HEK293T (cell line): ENCODE measurements at regions of chr2 and their contacts with region 1.

Region 1: DNA sequence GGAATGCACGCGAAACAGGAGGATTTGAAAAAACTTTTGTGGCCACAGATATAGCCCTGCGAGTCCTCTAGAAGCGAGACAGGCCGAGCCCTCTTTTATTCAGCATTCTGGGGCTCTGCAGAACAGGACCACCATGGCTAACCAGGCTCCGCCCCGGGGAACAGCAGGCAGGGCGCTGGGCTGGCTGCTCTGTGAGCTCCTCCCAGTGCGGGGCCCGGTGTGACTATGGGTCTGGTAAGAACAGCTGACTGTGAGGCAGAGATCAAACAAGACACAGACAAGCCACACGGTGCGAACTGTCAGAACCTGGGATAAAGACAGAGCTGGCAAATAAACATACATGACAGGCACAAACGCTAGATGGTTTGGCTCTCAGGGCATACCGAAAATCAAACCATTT is 15.5 kb downstream of the PXDN start:
- DNase-seq: peak; percentile 27

Region 2: DNA sequence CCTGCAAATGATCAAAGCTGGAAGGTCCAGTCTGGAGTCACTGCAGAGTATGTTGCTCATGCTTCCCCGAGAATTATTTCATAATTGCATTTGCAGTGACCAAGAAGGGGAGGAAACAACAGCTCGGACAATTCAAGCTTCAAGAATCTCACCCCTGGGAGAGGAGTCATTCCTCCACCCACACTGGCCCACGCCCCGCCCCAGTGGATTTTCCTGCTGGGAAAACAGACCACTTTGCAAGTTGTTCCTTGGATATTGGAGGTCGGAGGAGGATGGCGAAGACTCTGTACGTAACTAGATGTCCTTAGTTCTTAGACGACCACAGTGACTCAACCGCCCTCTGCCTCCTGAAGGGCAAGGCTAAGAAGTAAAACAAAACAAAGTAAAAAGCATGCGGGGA is 156.2 kb before region 1 on chr2:
- CTCF ChIA-PET with region 1: no interaction called
- POLR2A ChIA-PET with region 1: no interaction called
- DNase-seq: no peak

Region 3: GRCh38 chr2:1641523-1641922 is 87.3 kb before region 1 on chr2:
- CTCF ChIA-PET with region 1: no interaction called
- POLR2A ChIA-PET with region 1: no interaction called
- DNase-seq: no peak

Region 4: DNA sequence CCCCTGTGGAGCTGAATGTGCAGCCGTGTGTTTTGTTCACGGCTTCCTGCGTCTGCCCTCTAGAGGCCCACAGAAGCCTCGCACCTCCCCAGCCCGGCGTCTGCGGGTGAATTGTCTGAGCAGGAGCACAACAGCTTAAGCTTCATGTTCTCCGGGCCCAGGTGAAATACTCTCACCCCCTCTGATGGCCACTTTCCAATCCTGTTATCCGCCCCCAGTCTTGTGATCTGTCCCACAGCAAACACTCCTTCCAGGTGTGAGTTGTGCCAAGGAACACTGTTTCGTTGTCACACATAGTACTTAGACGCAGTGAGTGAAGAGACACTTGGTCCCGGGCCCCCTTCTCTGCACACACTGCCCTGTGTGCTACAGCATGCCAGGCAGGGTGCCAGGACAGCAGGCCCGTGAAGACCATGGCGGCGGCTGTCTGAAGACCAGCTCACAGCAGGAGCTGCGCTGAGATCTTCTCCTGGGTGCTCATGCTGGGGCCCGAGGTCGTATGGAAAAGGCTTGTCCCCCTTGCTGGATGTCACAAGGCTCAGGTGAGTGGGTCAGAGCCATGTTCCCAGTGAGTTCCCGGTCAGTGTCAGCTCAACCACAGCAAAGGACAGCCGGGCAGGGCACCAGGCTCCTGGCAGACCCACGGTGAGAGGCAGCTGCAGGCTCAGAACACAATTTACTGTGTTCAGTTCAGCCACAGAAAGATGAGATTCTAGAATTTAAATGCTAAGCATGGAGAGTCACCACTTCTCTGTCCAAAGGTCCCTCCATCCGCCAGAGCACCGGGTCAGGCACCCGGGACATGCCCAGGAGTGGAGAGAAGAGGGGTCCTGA is 22.3 kb after region 1 on chr2:
- CTCF ChIA-PET with region 1: interaction called, 10 read pairs
- POLR2A ChIA-PET with region 1: no interaction called
- DNase-seq: peak; percentile 75